ENCODE measurements at regions of chr2 and their contacts with region 1.

Region 1: GRCh38 chr2:152415231-152415642 is 80.3 kb downstream of the FMNL2 start:
- DNase-seq: peak; percentile 56
- H3K4me3 Mint-ChIP-seq: no peak overlapping the region
- H3K27ac Mint-ChIP-seq: peak overlapping the region; percentile 79
- H3K4me1 Mint-ChIP-seq: peaks cover 65% of the 10 kb centered on the region
- H3K27me3 Mint-ChIP-seq: no peaks in the 10 kb centered on the region
- CTCF ChIP-seq: no peak

Region 2: GRCh38 chr2:152115952-152116351 is 299.3 kb before region 1 on chr2:
- CTCF ChIA-PET with region 1: no interaction called
- POLR2A ChIA-PET with region 1: no interaction called
- intact Hi-C with region 1: no loop called
- DNase-seq: no peak
- H3K4me3 Mint-ChIP-seq: no peak overlapping the region
- H3K27ac Mint-ChIP-seq: no peak overlapping the region
- H3K4me1 Mint-ChIP-seq: no peaks in the 10 kb centered on the region
- H3K27me3 Mint-ChIP-seq: no peaks in the 10 kb centered on the region
- CTCF ChIP-seq: peak; percentile 11

Region 3: DNA sequence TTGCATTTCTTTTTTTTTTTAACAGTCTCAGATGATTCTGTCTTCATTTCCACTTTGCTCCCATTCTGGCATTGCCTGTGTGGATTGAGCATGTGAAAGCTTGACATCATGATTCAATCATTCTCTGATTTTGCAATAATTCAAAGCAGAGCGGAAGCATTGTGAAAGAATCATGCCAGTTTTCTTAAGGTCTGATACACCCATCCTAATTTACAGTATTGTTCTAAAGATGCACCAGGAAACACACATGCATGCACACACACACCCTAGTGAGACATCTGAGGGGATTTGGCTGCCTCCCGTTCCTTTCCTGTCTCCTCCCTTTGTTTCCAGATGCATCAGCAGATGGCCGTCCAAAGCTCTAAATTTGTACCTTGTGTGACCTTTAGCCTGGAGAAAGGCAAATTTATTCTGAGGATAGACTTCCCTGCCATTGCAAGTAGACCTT is 17.0 kb after region 1 on chr2:
- CTCF ChIA-PET with region 1: interaction called, 5 read pairs
- POLR2A ChIA-PET with region 1: interaction called, 12 read pairs
- intact Hi-C with region 1: no loop called
- DNase-seq: peak; percentile 96
- H3K4me3 Mint-ChIP-seq: peak overlapping the region; percentile 8
- H3K27ac Mint-ChIP-seq: peak overlapping the region; percentile 83
- H3K4me1 Mint-ChIP-seq: peaks cover 39% of the 10 kb centered on the region
- H3K27me3 Mint-ChIP-seq: no peaks in the 10 kb centered on the region
- CTCF ChIP-seq: no peak

Region 4: DNA sequence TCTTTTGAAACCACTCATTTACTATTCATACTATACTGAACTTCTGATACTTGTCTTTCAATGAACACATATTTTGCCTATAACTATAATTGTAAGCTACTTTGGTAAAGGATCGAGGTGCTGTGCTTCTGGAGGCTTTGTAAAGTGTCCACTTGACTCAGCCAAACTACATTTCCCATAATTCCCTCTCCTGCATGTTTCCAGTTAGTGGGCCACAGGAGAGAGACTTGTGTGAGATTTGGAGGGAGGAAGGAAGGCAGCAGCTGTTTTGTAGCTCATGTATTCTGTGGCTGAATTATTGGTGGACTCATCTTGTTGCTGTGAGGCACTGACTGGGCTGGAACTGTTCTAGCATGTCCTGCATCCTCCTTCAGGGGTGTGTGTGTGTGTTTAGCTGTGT is 632.0 kb after region 1 on chr2:
- CTCF ChIA-PET with region 1: no interaction called
- POLR2A ChIA-PET with region 1: no interaction called
- intact Hi-C with region 1: no loop called
- DNase-seq: no peak
- H3K4me3 Mint-ChIP-seq: no peak overlapping the region
- H3K27ac Mint-ChIP-seq: no peak overlapping the region
- H3K4me1 Mint-ChIP-seq: peaks cover 6% of the 10 kb centered on the region
- H3K27me3 Mint-ChIP-seq: no peaks in the 10 kb centered on the region
- CTCF ChIP-seq: no peak